Caco-2 (cell line): ENCODE measurements at regions of chr1 and their contacts with region 1.

Region 1: DNA sequence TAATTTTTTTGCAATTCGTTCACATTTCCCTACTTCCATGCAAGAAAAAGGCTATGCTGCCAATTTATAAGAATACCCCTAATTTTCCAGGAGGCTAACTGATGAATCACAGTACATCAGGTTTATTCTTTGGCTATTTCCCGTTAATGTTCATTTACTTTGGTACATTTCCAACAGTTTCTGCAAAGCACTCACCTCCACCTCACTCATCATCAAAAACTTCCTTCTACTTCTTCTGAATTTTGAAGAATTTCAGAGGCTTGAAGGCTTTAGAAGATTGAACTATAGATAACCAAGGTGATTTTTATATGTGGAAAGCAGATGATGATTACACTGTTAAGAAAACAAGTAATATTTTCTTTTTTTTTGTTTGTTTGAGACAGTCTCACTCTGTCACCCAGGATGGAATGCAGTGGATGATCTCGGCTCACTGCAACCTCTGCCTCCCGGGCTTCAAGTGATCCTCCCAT is 60.5 kb upstream of the HP1BP3 start:
- DNase-seq: no peak
- H3K4me3 ChIP-seq: no peak overlapping the region
- H3K4me3 Mint-ChIP-seq: no peak overlapping the region
- H3K27ac Mint-ChIP-seq: no peak overlapping the region
- H3K4me1 ChIP-seq: peaks cover 6% of the 10 kb centered on the region; the same call in 1 of the 2 replicates
- H3K4me1 Mint-ChIP-seq: no peaks in the 10 kb centered on the region
- H3K27me3 ChIP-seq: no peaks in the 10 kb centered on the region
- H3K27me3 Mint-ChIP-seq: no peaks in the 10 kb centered on the region
- CTCF ChIP-seq: no peak

Region 2: DNA sequence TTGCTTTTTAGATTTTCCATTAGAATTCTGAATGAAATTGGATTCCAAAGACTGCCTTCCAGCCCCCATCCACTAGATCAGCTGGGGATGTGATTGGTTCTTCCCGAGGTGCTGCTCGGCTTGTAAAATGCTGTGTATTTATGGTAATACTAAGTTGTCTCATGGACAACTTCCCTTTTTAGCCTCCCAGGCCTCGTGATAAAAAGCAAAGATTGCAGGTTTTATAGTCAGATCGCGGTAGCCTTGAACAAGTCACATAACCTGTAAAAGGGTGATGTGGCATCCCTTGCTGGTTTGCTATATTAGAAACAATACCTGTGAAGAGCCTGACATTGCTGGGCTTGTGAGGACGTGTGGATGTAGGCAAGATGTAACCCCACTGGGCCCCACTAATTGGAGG is 350.1 kb before region 1 on chr1:
- CTCF ChIA-PET with region 1: no interaction called
- POLR2A ChIA-PET with region 1: no interaction called
- intact Hi-C with region 1: no loop called
- DNase-seq: no peak
- H3K4me3 ChIP-seq: no peak overlapping the region
- H3K4me3 Mint-ChIP-seq: no peak overlapping the region
- H3K27ac Mint-ChIP-seq: no peak overlapping the region
- H3K4me1 ChIP-seq: no peaks in the 10 kb centered on the region
- H3K4me1 Mint-ChIP-seq: peaks cover 6% of the 10 kb centered on the region
- H3K27me3 ChIP-seq: no peaks in the 10 kb centered on the region
- H3K27me3 Mint-ChIP-seq: no peaks in the 10 kb centered on the region
- CTCF ChIP-seq: no peak

Region 3: DNA sequence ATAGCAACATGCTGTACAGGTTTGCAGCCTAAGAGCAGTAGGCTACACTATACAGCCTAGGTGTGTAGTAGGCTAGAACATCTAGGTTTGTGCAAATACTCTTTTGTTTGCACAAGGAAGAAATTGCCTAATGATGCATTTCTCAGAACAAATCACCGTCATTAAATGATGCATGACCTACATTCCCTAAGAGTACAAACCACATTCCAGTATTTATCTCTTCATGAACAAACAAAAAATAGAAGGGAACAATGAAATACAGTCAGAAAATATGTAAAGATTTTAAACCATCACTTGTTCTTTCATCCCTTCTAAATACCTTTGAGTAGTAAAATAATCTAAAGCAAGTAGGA is 49.2 kb after region 1 on chr1:
- CTCF ChIA-PET with region 1: no interaction called
- POLR2A ChIA-PET with region 1: no interaction called
- intact Hi-C with region 1: loop called (anchors 5 kb)
- DNase-seq: peak; percentile 47 to 70
- H3K4me3 ChIP-seq: no peak overlapping the region
- H3K4me3 Mint-ChIP-seq: no peak overlapping the region
- H3K27ac Mint-ChIP-seq: no peak overlapping the region
- H3K4me1 ChIP-seq: peaks cover 35% of the 10 kb centered on the region
- H3K4me1 Mint-ChIP-seq: peaks cover 7% of the 10 kb centered on the region
- H3K27me3 ChIP-seq: no peaks in the 10 kb centered on the region
- H3K27me3 Mint-ChIP-seq: no peaks in the 10 kb centered on the region
- CTCF ChIP-seq: no peak